ENCODE measurements at regions of chr10 and their contacts with region 1.

Region 1: GRCh38 chr10:75019370-75019769 is 92.1 kb upstream of the SAMD8 start:
- DNase-seq: no peak
- H3K4me3 ChIP-seq: peak overlapping the region in 47 of 59 donors; percentile 0 to 52 (median 28)
- H3K27ac ChIP-seq: peak overlapping the region in 44 of 59 donors; percentile 1 to 71 (median 44)
- H3K27me3 ChIP-seq: no peaks in the 10 kb centered on the region
- CTCF ChIP-seq: peak; percentile 29 to 80 (median 64)

Region 2: GRCh38 chr10:74262856-74263255 is 756.5 kb before region 1 on chr10:
- intact Hi-C with region 1: loop called (anchors 5 kb)
- DNase-seq: no peak
- H3K4me3 ChIP-seq: no peak overlapping the region
- H3K27ac ChIP-seq: no peak overlapping the region
- H3K27me3 ChIP-seq: no peaks in the 10 kb centered on the region
- CTCF ChIP-seq: no peak

Region 3: DNA sequence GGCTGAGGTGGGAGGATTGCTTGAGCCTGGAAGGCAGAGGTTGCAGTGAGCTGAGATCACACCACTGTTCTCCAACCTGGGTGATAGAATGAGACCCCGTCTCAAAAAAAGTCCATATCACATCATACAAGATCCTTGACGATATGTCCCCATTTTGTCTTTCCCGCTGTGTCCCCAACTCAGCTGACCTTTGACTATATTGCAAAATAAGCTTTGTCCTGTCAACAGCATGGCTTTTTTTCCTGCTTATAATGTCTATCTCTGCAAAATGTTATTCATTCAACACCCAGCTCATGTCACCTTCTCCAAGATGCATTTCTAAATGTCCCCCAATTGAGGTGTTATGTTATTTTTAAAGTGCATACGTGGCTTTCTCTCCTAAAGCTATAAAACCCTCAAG is 329.0 kb before region 1 on chr10:
- intact Hi-C with region 1: no loop called
- DNase-seq: no peak
- H3K4me3 ChIP-seq: no peak overlapping the region
- H3K27ac ChIP-seq: no peak overlapping the region
- H3K27me3 ChIP-seq: no peaks in the 10 kb centered on the region
- CTCF ChIP-seq: no peak

Region 4: GRCh38 chr10:74888962-74889663 is 130.3 kb before region 1 on chr10:
- intact Hi-C with region 1: loop called (anchors 5 to 10 kb)
- DNase-seq: peak in 1 of 10 donors; percentile 21
- H3K4me3 ChIP-seq: no peak overlapping the region
- H3K27ac ChIP-seq: no peak overlapping the region
- H3K27me3 ChIP-seq: no peaks in the 10 kb centered on the region
- CTCF ChIP-seq: peak in 36 of 56 donors; percentile 12 to 61 (median 34)

Region 5: DNA sequence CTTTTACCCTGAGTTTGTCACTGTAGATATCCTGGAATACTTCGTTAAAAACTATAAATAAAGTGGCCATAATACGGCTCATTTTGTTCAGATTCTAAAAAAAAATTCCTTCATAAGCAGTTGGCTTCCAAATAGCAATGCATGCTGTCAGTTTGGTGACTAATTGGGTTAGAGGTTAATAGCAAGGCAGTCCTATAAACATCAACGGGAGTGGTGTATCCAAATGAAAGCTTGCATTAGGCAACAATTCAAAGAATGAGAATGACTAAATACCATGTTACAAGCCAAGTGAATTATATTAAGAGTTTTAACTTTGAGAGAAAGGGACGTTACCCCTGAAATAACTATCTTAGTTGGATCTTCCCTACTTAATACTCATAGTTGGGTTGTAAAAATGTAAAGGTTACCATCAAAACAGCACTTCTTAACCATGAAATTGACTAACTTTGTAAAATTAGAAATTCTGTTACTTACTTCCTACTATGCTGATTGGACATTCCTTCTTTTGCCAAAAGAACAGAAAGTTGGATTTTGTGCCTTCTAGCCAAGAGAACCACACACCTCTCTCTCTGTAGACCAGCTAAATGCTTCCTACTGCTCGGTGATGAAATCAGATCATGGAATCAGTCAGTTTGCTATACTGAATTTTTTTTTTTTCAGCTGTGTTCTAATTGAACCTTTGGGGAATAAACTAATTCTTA is 95.0 kb before region 1 on chr10:
- intact Hi-C with region 1: loop called (anchors 5 to 10 kb)
- DNase-seq: no peak
- H3K4me3 ChIP-seq: peak overlapping the region in 2 of 59 donors; percentile 4 to 9
- H3K27ac ChIP-seq: peak overlapping the region in 49 of 59 donors; percentile 21 to 89 (median 63)
- H3K27me3 ChIP-seq: no peaks in the 10 kb centered on the region
- CTCF ChIP-seq: no peak

Region 6: GRCh38 chr10:75099952-75100763 is 80.8 kb after region 1 on chr10:
- intact Hi-C with region 1: loop called in 1 of 2 experiments (anchors 5 kb)
- DNase-seq: peak; percentile 67 to 90 (median 80)
- H3K4me3 ChIP-seq: peak overlapping the region in 22 of 59 donors; percentile 1 to 32 (median 10)
- H3K27ac ChIP-seq: peak overlapping the region in 29 of 59 donors; percentile 1 to 83 (median 51)
- H3K27me3 ChIP-seq: no peaks in the 10 kb centered on the region
- CTCF ChIP-seq: peak; percentile 89 to 100 (median 99)